Activated CD4-positive, alpha-beta T cell treated with anti-CD3 and anti-CD28 coated beads for 36 hours (primary cell): ENCODE measurements at regions of chr17 and their contacts with region 1.

Region 1: DNA sequence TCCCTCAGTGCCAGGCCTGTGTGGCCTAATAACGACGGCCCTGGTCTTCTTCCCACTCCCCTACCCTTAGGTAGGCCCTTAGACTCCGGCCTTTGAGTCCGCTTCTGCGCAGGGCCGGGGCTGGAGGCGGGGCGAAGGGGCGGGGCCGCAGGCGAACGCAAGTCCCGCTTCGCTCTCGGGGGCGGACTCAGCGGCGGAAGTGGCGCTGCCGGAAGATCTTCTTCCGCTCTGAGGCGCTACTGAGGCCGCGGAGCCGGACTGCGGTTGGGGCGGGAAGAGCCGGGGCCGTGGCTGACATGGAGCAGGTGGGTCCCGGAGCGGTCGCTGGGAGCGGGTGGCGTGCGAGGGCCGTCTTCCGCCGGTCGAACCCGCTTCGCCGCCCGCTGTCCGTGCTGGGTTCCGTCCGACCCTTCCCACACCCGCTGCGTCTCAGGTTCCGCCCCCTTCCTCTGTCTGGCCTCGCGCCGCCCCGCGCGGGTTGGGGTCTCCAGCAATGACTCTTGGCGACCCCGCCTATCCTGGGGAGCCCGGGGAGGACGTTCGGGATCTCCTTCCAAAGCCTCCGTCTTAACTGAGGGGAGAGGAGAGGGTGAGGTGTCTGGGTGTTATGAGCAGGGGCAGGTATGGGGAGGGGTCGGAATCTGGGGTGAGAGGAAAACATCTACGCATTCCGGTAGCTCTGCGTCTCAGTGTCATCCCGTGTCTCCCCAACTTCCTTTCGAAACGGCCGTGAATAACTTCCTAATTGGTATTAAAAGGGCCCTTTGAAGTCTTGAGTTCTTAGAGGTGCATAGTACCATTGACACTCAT is at the start of gene STARD3:
- DNase-seq: peak; percentile 96
- ATAC-seq: peak; percentile 87
- H3K4me3 Mint-ChIP-seq: peak within 1 kb of the TSS; percentile 86
- H3K27ac Mint-ChIP-seq: peak within 1 kb of the TSS; percentile 83
- H3K4me1 Mint-ChIP-seq: peaks cover 51% of the 10 kb centered on the region
- H3K27me3 Mint-ChIP-seq: no peaks in the 10 kb centered on the region
- total RNA-seq, gene STARD3: 46.8 to 77.9 TPM

Region 2: GRCh38 chr17:39235555-39236449 is 401.3 kb before region 1 on chr17:
- CTCF ChIA-PET with region 1: no interaction called
- POLR2A ChIA-PET with region 1: interaction called, 3 read pairs
- intact Hi-C with region 1: loop called in 1 of 2 experiments (anchors 10 kb)
- DNase-seq: peak; percentile 78
- ATAC-seq: peak; percentile 84
- H3K4me3 Mint-ChIP-seq: no peak overlapping the region
- H3K27ac Mint-ChIP-seq: no peak overlapping the region
- H3K4me1 Mint-ChIP-seq: peaks cover 41% of the 10 kb centered on the region
- H3K27me3 Mint-ChIP-seq: peaks cover 5% of the 10 kb centered on the region

Region 3: DNA sequence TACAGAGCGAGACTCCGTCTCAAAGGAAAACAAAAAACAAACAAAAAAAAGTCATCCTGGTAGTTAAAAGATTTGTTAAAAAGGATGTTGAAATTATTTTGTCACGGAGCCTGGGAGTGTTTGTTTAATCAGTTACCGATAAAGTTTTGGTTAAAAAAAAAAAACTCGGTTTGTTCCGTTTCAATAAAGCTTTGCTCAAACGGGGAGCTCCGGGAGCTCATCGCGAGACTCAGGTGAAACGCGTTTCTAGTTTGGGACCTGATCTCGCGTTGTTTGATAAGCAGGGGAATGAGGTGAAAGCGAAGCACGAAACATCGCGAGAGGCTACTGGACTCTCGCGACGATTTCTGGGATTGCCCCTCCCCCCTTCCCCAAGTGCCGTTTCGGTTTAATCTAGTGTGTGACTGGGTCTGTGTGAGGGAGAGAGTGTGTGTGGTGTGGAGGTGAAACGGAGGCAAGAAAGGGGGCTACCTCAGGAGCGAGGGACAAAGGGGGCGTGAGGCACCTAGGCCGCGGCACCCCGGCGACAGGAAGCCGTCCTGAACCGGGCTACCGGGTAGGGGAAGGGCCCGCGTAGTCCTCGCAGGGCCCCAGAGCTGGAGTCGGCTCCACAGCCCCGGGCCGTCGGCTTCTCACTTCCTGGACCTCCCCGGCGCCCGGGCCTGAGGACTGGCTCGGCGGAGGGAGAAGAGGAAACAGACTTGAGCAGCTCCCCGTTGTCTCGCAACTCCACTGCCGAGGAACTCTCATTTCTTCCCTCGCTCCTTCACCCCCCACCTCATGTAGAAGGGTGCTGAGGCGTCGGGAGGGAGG is 175.8 kb before region 1 on chr17 and contains the start of gene CDK12:
- CTCF ChIA-PET with region 1: no interaction called
- POLR2A ChIA-PET with region 1: no interaction called
- intact Hi-C with region 1: loop called in 1 of 2 experiments (anchors 1 kb)
- DNase-seq: peak; percentile 97
- ATAC-seq: peak; percentile 91
- H3K4me3 Mint-ChIP-seq: peak within 1 kb of the TSS; percentile 91
- H3K27ac Mint-ChIP-seq: peak within 1 kb of the TSS; percentile 94
- H3K4me1 Mint-ChIP-seq: peaks cover 22% of the 10 kb centered on the region
- H3K27me3 Mint-ChIP-seq: no peaks in the 10 kb centered on the region
- total RNA-seq, gene CDK12: 65.9 to 83.3 TPM

Region 4: DNA sequence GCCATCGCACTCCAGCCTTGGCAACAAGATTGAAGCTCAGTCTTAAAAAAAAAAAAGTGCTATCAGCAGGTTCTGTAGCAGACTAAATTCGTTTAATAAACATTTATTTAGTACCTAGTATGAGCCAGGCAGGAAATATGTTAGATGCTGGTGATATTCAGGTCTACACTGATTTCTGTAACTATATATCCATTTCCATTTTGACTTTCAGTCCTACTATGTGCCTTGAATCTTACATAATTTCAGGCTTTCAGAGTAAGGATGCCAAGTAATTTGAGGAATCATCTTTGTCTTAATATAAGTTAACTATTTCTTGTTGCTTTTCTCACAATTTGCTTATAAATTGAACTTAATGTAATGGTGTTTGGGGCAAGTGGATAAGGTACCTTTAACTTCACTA is 129.6 kb before region 1 on chr17:
- CTCF ChIA-PET with region 1: no interaction called
- POLR2A ChIA-PET with region 1: no interaction called
- intact Hi-C with region 1: no loop called
- DNase-seq: no peak
- ATAC-seq: no peak
- H3K4me3 Mint-ChIP-seq: no peak overlapping the region
- H3K27ac Mint-ChIP-seq: no peak overlapping the region
- H3K4me1 Mint-ChIP-seq: no peaks in the 10 kb centered on the region
- H3K27me3 Mint-ChIP-seq: no peaks in the 10 kb centered on the region

Region 5: GRCh38 chr17:39653662-39654331 is 16.7 kb after region 1 on chr17:
- CTCF ChIA-PET with region 1: interaction called, 25 read pairs
- POLR2A ChIA-PET with region 1: no interaction called
- intact Hi-C with region 1: no loop called
- DNase-seq: peak; percentile 92
- ATAC-seq: peak; percentile 94
- H3K4me3 Mint-ChIP-seq: no peak overlapping the region
- H3K27ac Mint-ChIP-seq: no peak overlapping the region
- H3K4me1 Mint-ChIP-seq: peaks cover 36% of the 10 kb centered on the region
- H3K27me3 Mint-ChIP-seq: no peaks in the 10 kb centered on the region

Region 6: GRCh38 chr17:39687811-39688518 is 50.8 kb after region 1 on chr17 and contains the start of gene PGAP3:
- CTCF ChIA-PET with region 1: interaction called, 4 read pairs
- POLR2A ChIA-PET with region 1: no interaction called
- intact Hi-C with region 1: loop called (anchors 1 to 2 kb)
- DNase-seq: peak; percentile 92
- ATAC-seq: peak; percentile 96
- H3K4me3 Mint-ChIP-seq: peak within 1 kb of the TSS; percentile 86
- H3K27ac Mint-ChIP-seq: peak within 1 kb of the TSS; percentile 95
- H3K4me1 Mint-ChIP-seq: peaks cover 19% of the 10 kb centered on the region
- H3K27me3 Mint-ChIP-seq: no peaks in the 10 kb centered on the region
- total RNA-seq, gene PGAP3: 8.6 to 11.9 TPM

Region 7: DNA sequence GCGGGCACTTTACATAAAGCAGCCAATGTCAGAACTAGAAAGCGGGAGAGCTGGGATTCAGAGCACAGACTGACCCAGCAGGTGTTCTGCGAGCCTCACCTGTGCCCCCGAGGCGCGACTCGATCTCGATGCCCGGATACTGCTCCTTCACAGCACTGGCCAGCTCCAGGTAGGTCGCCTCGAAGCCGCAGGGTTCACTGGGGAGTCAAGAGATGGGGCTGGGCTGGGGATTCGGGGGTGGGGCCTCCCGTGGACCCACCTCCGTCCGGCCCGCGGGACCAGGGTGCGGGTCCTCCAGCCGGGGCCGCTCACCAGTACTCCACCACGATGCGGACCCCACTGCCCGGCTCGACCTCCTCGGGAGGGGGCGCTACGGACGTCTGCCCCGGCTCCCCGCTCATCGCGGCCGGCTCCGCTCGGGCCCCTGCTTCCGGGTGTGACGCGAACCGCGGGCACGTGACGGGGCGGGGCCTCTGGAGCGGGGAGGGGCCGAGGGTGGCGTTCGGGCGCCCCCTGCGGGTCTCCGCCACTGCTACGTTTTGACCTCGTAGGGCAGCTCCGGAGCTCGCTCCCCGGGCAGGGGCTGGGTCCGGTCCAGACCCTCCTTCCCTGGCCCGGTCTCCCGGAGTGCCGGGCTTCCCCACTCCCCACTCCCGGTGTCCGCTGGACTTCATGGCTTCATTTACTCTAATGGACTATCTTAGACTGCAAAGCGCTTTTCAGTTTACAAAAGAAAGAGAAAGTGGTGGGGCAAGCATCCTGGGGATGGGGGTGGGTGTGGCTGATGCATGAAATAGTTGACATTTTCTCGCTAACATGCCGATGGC is 93.2 kb after region 1 on chr17 and contains the start of gene MIEN1:
- CTCF ChIA-PET with region 1: interaction called, 8 read pairs
- POLR2A ChIA-PET with region 1: no interaction called
- intact Hi-C with region 1: loop called in 1 of 2 experiments (anchors 1 kb)
- DNase-seq: peak; percentile 97
- ATAC-seq: peak; percentile 92
- H3K4me3 Mint-ChIP-seq: peak within 1 kb of the TSS; percentile 90
- H3K27ac Mint-ChIP-seq: peak within 1 kb of the TSS; percentile 88
- H3K4me1 Mint-ChIP-seq: peaks cover 15% of the 10 kb centered on the region
- H3K27me3 Mint-ChIP-seq: no peaks in the 10 kb centered on the region
- total RNA-seq, gene MIEN1: 32.5 to 39.4 TPM

Region 8: DNA sequence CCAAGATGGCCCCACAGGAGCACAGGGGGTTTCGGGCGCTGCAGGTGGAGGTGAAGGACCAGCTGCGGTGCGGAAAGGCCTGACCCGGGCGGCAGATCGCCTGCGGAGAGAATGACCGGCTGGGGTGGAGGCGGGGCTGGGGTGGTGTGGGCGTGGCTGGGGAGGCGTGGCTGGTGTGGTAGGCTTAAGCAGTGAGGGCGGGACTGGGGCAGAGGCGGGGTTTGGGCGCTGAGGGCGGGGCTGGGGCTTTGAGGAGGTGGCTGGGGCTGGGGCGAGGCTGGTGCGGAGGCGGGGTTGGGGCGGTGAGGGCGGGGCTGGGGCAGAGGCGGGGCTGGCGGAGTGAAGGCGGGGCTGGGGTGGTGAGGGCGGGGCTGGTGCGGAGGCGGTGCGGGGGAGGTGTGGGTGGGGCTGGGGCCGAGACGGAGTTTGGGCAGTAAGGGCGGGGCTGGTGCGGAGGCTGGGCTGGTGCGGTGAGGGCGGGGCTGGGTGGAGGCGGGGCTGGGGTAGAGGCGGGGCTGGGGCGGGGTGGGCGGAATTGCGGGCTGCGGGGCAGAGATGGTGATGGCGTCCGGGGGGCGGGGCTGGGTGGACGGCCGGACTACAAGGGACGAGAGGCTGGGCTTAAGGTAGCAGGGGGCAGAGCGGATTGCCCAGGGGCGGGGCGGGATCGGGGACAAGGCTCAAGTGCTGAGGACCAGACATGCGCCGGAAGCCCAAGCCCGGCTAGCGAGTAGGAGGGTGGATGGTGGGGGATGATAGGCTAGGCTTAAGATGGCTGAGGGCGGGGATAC is 315.7 kb after region 1 on chr17:
- CTCF ChIA-PET with region 1: no interaction called
- POLR2A ChIA-PET with region 1: no interaction called
- intact Hi-C with region 1: loop called in 1 of 2 experiments (anchors 2 kb)
- DNase-seq: peak; percentile 98
- ATAC-seq: peak; percentile 87
- H3K4me3 Mint-ChIP-seq: peak overlapping the region; percentile 73
- H3K27ac Mint-ChIP-seq: peak overlapping the region; percentile 69
- H3K4me1 Mint-ChIP-seq: peaks cover 12% of the 10 kb centered on the region
- H3K27me3 Mint-ChIP-seq: no peaks in the 10 kb centered on the region